ENCODE measurements at regions of chr2 and their contacts with region 1.

Region 1: DNA sequence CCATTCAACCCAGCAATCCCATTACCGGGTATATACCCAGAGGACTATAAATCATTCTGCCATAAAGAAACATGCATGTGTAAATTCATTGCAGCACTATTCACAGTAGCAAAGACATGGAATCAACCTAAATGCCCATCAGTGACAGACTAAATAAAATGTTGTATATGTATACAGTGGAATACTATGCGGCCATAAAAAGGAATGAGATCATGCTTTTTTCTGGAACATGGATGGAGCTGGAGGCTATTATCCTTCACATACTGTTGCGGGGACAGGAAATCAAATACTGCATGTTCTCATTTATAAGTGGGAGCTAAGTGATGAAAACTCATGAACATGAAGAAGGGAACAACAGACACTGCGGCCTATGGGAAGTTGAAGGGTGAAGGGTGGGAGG is 65.1 kb downstream of the EHBP1 start:
- DNase-seq: no peak
- H3K4me3 ChIP-seq: no peak overlapping the region
- H3K27ac ChIP-seq: no peak overlapping the region
- H3K4me1 ChIP-seq: no peaks in the 10 kb centered on the region
- H3K27me3 ChIP-seq: no peaks in the 10 kb centered on the region
- CTCF ChIP-seq: no peak
- POLR2A ChIP-seq: no peak

Region 2: DNA sequence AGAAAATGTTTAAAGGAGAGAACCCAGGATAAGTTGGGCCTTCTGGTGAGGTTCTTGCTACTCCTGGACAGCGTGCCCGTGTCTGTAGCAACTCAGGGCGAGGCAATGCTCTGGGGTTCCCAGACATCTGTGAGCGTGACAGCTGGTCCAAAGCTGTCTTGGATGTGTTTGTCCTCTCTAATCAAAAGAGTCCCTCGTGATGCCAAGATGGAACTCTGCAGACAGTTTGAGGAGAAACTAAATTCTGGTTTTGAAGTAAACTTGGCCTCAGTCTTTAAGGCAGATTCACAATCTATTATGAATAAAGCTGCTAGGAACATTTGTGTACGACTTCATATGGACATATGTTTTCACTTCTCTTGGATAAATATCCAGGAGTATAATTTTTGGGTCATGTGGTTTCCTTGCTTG is 312.0 kb before region 1 on chr2:
- intact Hi-C with region 1: loop called (anchors 2 kb)
- DNase-seq: no peak
- H3K4me3 ChIP-seq: no peak overlapping the region
- H3K27ac ChIP-seq: no peak overlapping the region
- H3K4me1 ChIP-seq: peaks cover 9% of the 10 kb centered on the region
- H3K27me3 ChIP-seq: no peaks in the 10 kb centered on the region
- CTCF ChIP-seq: no peak
- POLR2A ChIP-seq: no peak

Region 3: GRCh38 chr2:62687628-62688027 is 83.0 kb before region 1 on chr2:
- intact Hi-C with region 1: no loop called
- DNase-seq: no peak
- H3K4me3 ChIP-seq: no peak overlapping the region
- H3K27ac ChIP-seq: no peak overlapping the region
- H3K4me1 ChIP-seq: no peaks in the 10 kb centered on the region
- H3K27me3 ChIP-seq: no peaks in the 10 kb centered on the region
- CTCF ChIP-seq: no peak
- POLR2A ChIP-seq: no peak

Region 4: GRCh38 chr2:62871506-62871905 is 100.9 kb after region 1 on chr2:
- intact Hi-C with region 1: no loop called
- DNase-seq: no peak
- H3K4me3 ChIP-seq: no peak overlapping the region
- H3K27ac ChIP-seq: no peak overlapping the region
- H3K4me1 ChIP-seq: no peaks in the 10 kb centered on the region
- H3K27me3 ChIP-seq: no peaks in the 10 kb centered on the region
- CTCF ChIP-seq: no peak
- POLR2A ChIP-seq: no peak

Region 5: DNA sequence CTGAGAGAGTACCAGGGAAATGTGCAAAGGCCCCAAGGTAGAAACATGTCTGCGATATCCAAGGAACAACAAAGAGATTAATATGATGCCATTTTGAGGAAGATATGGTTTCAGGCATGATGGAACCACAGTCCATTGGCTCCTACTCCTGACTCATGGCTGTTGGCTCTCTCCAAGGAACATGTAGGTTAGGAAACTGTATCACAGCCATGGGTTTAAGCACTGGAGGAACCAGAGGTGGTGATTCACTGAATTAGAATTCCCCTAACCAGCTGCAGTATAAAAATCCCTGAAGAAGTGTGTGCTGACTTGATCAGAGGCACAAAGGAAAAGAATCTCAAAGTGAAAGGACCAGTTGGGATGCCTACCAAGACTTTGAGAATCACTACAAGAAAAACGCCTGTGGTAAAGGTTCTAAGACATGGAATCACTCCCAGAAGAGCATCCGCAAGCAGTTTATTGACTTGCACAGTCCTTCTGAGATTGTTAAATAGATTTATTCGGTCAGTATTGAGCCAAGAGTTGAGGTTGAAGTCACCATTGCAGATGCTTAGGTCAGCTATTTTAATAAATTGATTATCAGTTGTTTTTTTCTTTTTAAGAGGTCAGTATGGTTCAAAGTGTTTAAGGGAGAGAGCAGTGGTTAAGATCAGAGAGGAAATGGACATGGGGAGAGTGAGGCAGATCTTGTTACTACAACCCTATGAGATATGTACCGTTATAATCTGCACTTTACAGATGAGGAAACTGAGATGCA is 169.3 kb after region 1 on chr2:
- intact Hi-C with region 1: no loop called
- DNase-seq: no peak
- H3K4me3 ChIP-seq: no peak overlapping the region
- H3K27ac ChIP-seq: no peak overlapping the region
- H3K4me1 ChIP-seq: no peaks in the 10 kb centered on the region
- H3K27me3 ChIP-seq: no peaks in the 10 kb centered on the region
- CTCF ChIP-seq: no peak
- POLR2A ChIP-seq: no peak